MCF 10A (cell line): ENCODE measurements at regions of chr4 and their contacts with region 1.

Region 1: GRCh38 chr4:74444891-74445642 is at the start of gene AREG:
- DNase-seq: peak; percentile 90
- H3K4me3 Mint-ChIP-seq: peak within 1 kb of the TSS; percentile 95
- H3K27ac Mint-ChIP-seq: peak within 1 kb of the TSS; percentile 37
- H3K4me1 Mint-ChIP-seq: peaks cover 21% of the 10 kb centered on the region
- H3K27me3 Mint-ChIP-seq: no peaks in the 10 kb centered on the region
- CTCF ChIP-seq: peak; percentile 44
- total RNA-seq, gene AREG: 1,402 and 1,878 TPM in 2 replicates

Region 2: DNA sequence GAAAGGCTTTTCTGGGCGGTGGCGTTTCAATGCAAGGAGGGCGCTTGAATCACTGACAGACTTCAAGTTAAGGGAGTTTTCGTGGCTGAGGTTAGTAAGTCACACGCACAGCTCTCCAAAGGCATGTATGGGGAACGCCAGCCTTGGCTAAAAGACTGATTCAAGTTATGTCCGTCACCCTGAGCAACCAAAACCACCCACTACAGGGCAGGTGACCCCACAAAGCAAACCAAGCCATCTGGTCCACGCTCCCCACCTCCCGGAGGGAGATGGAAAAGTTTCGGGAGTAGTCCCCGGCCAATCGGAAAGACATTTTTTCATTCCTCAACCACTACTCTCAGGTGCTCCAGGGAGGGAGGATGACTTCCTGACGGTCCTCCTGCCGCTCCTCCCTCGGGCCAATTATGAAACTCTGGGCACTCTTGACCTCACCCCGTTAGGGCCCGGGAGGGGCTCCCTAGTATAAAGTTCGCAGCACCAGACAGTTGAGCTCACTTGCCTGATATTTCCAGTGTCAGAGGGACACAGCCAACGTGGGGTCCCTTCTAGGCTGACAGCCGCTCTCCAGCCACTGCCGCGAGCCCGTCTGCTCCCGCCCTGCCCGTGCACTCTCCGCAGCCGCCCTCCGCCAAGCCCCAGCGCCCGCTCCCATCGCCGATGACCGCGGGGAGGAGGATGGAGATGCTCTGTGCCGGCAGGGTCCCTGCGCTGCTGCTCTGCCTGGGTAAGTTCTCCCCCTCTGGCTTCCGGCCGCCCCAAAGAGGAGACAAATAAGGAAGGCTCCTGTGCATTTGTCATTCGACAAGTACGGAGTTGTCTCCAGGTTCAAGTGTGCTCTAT is 80.2 kb before region 1 on chr4 and contains the start of gene EREG:
- CTCF ChIA-PET with region 1: interaction called, 3 read pairs
- POLR2A ChIA-PET with region 1: interaction called, 22 read pairs
- intact Hi-C with region 1: no loop called
- DNase-seq: peak; percentile 66
- H3K4me3 Mint-ChIP-seq: peak within 1 kb of the TSS; percentile 77
- H3K27ac Mint-ChIP-seq: peak within 1 kb of the TSS; percentile 59
- H3K4me1 Mint-ChIP-seq: peaks cover 17% of the 10 kb centered on the region
- H3K27me3 Mint-ChIP-seq: no peaks in the 10 kb centered on the region
- CTCF ChIP-seq: no peak
- total RNA-seq, gene EREG: 28.3 and 34.0 TPM in 2 replicates

Region 3: GRCh38 chr4:74376888-74377483 is 68.1 kb before region 1 on chr4:
- CTCF ChIA-PET with region 1: interaction called, 55 read pairs
- POLR2A ChIA-PET with region 1: interaction called, 188 read pairs
- intact Hi-C with region 1: loop called (anchors 1 kb)
- DNase-seq: peak; percentile 79
- H3K4me3 Mint-ChIP-seq: peak overlapping the region; percentile 71
- H3K27ac Mint-ChIP-seq: peak overlapping the region; percentile 97
- H3K4me1 Mint-ChIP-seq: peaks cover 20% of the 10 kb centered on the region
- H3K27me3 Mint-ChIP-seq: no peaks in the 10 kb centered on the region
- CTCF ChIP-seq: peak; percentile 71

Region 4: GRCh38 chr4:74402692-74403456 is 42.2 kb before region 1 on chr4:
- CTCF ChIA-PET with region 1: interaction called, 3 read pairs
- POLR2A ChIA-PET with region 1: interaction called, 170 read pairs
- intact Hi-C with region 1: loop called (anchors 1 kb)
- DNase-seq: no peak
- H3K4me3 Mint-ChIP-seq: no peak overlapping the region
- H3K27ac Mint-ChIP-seq: no peak overlapping the region
- H3K4me1 Mint-ChIP-seq: peaks cover 6% of the 10 kb centered on the region
- H3K27me3 Mint-ChIP-seq: no peaks in the 10 kb centered on the region
- CTCF ChIP-seq: no peak

Region 5: DNA sequence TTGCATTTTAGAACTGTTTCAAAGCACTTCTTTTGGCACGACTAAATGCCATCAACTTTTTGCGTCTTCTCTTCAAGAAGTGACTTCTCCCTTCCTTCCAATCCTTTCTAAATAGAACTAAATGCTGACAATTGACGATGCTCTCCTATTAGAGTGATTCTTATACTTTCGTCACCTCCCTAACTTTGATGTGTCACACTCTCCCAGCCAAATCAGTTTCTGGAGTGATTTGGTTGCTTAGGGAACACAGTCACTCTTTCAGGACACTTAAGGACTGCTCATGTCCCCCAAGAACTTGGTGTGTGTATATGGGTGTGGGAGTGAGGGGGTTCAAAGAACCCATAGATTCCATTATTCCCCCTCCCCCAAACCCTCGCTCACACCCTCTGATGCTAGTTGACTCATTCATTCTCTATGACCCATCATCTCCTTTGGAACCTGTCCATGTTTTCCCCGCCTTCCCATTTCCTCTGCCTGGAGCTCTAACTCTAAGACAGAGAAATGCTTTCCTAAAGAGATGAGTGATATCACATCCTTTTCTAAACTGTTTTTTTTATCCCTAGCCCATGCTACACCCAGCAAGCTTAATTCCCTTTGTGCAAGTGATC is 26.9 kb before region 1 on chr4:
- CTCF ChIA-PET with region 1: interaction called, 4 read pairs
- POLR2A ChIA-PET with region 1: interaction called, 217 read pairs
- intact Hi-C with region 1: no loop called
- DNase-seq: peak; percentile 96
- H3K4me3 Mint-ChIP-seq: peak overlapping the region; percentile 61
- H3K27ac Mint-ChIP-seq: peak overlapping the region; percentile 94
- H3K4me1 Mint-ChIP-seq: peaks cover 63% of the 10 kb centered on the region
- H3K27me3 Mint-ChIP-seq: no peaks in the 10 kb centered on the region
- CTCF ChIP-seq: no peak

Region 6: GRCh38 chr4:74473155-74473811 is 28.2 kb after region 1 on chr4:
- CTCF ChIA-PET with region 1: interaction called, 3 read pairs
- POLR2A ChIA-PET with region 1: interaction called, 104 read pairs
- intact Hi-C with region 1: no loop called
- DNase-seq: peak; percentile 85
- H3K4me3 Mint-ChIP-seq: no peak overlapping the region
- H3K27ac Mint-ChIP-seq: no peak overlapping the region
- H3K4me1 Mint-ChIP-seq: peaks cover 37% of the 10 kb centered on the region
- H3K27me3 Mint-ChIP-seq: no peaks in the 10 kb centered on the region
- CTCF ChIP-seq: no peak